ENCODE measurements at regions of chr5 and their contacts with region 1.

Region 1: GRCh38 chr5:159386028-159386711 is 55.9 kb upstream of the IL12B start:
- DNase-seq: no peak
- H3K4me3 ChIP-seq: no peak overlapping the region
- H3K27ac ChIP-seq: no peak overlapping the region
- H3K4me1 ChIP-seq: no peaks in the 10 kb centered on the region
- H3K27me3 ChIP-seq: no peaks in the 10 kb centered on the region
- CTCF ChIP-seq: no peak
- POLR2A ChIP-seq: no peak

Region 2: GRCh38 chr5:158686214-158686613 is 700.0 kb before region 1 on chr5:
- intact Hi-C with region 1: loop called (anchors 5 kb)
- DNase-seq: no peak
- H3K4me3 ChIP-seq: no peak overlapping the region
- H3K27ac ChIP-seq: no peak overlapping the region
- H3K4me1 ChIP-seq: no peaks in the 10 kb centered on the region
- H3K27me3 ChIP-seq: no peaks in the 10 kb centered on the region
- CTCF ChIP-seq: no peak
- POLR2A ChIP-seq: no peak

Region 3: GRCh38 chr5:159341914-159342313 is 44.3 kb before region 1 on chr5:
- intact Hi-C with region 1: no loop called
- DNase-seq: peak; percentile 60 to 72
- H3K4me3 ChIP-seq: no peak overlapping the region
- H3K27ac ChIP-seq: no peak overlapping the region
- H3K4me1 ChIP-seq: no peaks in the 10 kb centered on the region
- H3K27me3 ChIP-seq: peaks cover 0 to 9% of the 10 kb centered on the region in 2 donors
- CTCF ChIP-seq: no peak
- POLR2A ChIP-seq: no peak

Measured in breast epithelium (tissue), 4 donors.